GM13977 (cell line): ENCODE measurements at regions of chr11 and their contacts with region 1.

Region 1: DNA sequence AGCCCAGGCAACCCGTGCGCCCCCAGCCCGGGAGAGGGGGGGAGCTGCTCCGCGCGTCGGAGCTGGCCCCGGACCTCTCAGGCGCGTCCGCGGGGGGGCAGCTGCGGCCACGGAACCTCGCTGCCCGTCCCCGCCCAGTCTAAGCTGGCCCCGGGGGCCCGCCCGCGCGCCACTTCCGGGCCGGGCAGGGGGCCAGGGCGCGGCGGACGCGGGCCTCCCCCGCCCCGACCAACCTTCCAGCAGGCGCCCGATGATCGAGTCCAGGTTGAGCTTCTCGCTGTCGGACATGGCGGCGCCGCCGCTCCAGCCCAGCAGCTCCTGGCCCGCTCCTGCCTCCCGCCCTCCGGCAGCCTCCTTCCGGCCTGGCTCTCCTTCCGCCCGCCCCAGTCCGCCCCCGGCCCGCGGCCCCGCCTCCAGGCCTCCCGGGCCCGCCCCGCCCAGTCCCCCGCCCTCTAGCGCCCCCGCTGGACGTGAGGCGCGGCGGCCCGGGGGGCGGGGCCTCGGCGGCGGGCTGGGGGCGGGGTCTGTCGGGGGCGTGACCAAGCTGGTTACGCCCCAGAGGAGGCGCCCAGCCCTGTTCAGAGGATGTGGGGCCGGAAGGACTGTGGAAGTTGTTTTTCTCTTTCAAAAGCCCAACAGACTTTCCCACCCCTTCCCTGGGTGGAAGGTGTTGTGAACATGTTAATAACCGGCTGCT is at the start of gene PPP1CA:
- DNase-seq: peak; percentile 100
- CTCF ChIP-seq: peak; percentile 52

Region 2: DNA sequence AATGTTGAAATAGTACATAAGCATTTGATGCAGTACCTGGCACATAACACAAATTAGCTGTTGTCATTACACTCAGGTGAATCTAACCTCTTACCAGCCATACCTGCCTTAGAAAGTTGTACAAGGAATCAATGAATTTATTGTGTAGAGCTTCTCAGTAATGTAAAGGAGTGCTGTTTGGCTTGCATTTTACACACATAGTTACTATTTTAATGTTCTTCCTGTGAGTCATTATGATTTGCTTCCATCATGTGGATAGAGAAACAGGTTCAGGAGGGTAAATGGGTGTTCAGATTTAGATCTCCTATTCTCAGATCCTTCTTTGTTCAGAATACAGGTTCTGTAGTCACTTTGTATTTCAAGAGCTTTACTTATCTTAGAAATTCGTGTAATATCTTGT is 586.0 kb before region 1 on chr11:
- in situ Hi-C with region 1: no loop called
- DNase-seq: no peak
- CTCF ChIP-seq: no peak

Region 3: GRCh38 chr11:67032830-67033555 is 368.6 kb before region 1 on chr11:
- in situ Hi-C with region 1: no loop called
- DNase-seq: no peak
- CTCF ChIP-seq: no peak

Region 4: DNA sequence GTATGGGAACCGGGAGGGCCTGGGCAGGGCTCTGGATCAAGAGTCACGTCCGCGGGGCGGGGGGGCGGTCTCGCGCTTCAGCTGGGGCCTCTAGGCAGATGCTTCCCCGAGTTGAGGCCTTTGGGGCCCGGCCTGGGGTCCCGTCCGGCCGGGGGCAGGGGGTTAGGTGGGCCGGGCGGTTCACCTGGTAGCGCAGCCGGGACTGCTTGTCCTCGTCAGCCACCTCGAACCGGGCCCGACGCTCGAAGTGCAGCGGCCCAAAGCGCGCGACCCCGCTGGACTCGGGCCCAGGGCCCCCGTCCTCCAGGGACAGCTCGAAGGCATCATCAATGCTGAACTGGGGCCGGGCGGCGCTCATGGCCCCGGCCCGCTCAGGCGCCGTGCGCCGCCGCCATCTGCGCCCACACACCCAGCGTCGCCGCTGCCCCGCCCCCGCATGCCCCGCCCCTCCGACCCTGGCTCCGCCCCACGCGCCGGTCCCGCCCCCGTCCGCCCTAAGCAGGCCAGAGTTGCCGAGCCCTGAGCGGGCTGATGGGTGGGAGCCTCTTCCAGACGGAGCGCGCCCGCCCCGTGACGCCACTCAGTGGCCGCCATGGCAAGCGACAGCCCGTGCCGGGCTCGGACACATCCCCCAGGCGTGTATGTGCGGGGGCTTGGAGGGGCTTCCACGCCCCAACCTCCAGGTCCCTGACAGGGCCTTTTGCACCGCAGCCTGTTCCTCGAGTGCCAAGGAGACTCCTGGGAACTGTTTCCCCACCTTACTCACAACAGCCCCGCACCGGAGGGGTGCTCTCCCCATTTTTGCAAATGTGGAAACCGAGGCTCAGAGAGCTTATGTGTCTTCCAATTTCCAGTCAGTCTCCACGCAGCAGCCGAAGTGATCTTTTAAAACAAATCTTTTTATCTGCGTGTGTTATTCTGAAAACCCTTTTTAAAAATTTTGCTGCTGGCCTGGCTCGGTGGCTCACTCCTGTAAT is 67.5 kb after region 1 on chr11 and contains the start of gene TMEM134:
- in situ Hi-C with region 1: loop called (anchors 10 kb)
- DNase-seq: peak; percentile 97
- CTCF ChIP-seq: peak; percentile 80

Region 5: DNA sequence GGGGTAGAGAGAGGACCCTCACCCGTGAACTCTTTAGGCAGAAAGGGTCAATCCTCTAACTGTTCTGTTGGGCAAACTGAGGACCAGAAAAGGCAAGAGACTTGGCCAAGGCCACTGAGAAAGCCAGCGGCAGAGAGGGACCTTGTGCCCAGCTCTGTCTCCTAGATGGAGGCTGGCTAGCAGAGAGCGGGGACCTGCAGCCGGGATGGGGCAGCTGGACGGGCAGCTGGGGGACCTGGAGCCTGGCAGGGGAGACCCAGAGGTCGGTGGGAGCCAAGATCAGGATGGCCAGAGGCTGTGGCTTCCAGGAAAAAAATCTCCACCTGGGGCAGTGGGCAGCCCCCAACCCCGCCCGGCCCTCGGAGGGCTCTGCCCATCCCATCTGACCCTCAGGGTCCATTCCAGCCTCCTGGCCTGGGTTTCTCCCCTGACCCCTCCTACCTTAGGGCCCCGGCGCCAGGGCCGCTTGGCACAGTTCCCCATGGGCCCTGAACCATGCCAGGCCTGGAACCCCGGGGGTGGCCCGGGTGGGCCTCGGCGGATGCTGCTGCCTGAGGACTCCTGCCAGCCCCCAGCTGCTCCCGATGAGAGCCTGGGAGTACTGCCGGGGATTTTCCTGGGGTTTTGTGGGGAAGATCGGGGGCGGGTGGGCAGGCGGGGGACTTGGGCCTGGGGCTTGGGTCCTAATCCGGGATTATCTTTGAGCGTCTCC is 121.4 kb after region 1 on chr11 and contains the start of gene CABP2:
- in situ Hi-C with region 1: no loop called
- DNase-seq: no peak
- CTCF ChIP-seq: no peak